ENCODE measurements at regions of chr17 and their contacts with region 1.

Region 1: GRCh38 chr17:1628856-1629646 is 417 bp upstream of the SLC43A2 start:
- DNase-seq: peak; percentile 95
- ATAC-seq: peak; percentile 85

Region 2: GRCh38 chr17:1573916-1574696 is 54.9 kb before region 1 on chr17:
- intact Hi-C with region 1: loop called (anchors 5 to 10 kb)
- DNase-seq: peak; percentile 72 to 93
- ATAC-seq: peak; percentile 69